WTC11 (cell line): ENCODE measurements at regions of chr17 and their contacts with region 1.

Region 1: GRCh38 chr17:49880291-49881053 is 32.6 kb upstream of the TAC4 start:
- DNase-seq: peak; percentile 96
- ATAC-seq: peak; percentile 89
- H3K4me3 Mint-ChIP-seq: peak overlapping the region; percentile 71
- H3K27ac Mint-ChIP-seq: no peak overlapping the region
- H3K4me1 Mint-ChIP-seq: peaks cover 30% of the 10 kb centered on the region
- H3K27me3 Mint-ChIP-seq: peaks cover 28% of the 10 kb centered on the region
- CTCF ChIP-seq: peak; percentile 96

Region 2: GRCh38 chr17:49861150-49861892 is 19.2 kb before region 1 on chr17:
- CTCF ChIA-PET with region 1: interaction called, 26 read pairs
- POLR2A ChIA-PET with region 1: interaction called, 4 read pairs
- DNase-seq: no peak
- ATAC-seq: no peak
- H3K4me3 Mint-ChIP-seq: no peak overlapping the region
- H3K27ac Mint-ChIP-seq: no peak overlapping the region
- H3K4me1 Mint-ChIP-seq: peaks cover 41% of the 10 kb centered on the region
- H3K27me3 Mint-ChIP-seq: peaks cover 2% of the 10 kb centered on the region; the same call in 1 of the 2 replicates
- CTCF ChIP-seq: peak; percentile 80

Region 3: DNA sequence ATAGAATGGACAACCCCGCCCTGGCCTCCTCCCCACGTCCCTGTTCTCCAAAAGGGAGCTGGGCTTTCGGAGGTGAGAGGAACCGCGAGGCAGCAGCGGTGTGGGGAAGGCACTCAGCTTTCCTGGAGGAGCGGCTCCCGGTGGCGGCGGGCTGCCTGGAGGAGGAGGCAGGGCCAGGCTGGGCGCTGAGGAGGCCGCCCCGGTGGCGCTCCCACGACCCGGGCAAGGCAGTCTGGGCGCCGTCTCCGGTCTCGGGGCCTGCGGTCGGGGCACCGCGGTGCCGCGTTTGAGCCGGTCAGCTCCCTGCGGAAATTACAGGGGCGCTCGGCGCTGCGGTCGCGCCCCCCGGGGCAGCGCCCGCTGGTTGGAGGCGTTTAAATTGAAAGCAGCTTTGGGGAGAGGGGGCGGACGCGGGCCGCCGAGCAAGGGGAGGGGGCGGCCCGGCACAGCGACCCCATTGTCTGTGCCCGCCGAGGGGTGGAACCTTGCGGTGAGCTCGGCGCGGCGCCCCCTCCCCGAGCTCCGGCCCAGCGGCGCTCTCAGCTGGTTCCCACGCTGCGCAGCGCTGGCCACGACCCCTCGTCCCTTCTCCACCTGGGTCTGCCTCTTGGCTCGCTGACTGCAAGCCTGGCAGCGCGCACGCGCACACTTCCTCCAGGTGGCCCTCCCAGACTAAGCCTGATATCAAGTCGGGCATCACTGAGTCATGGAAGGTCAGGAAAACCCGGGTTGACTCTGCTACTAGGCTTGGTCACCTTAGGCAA is 29.8 kb after region 1 on chr17:
- CTCF ChIA-PET with region 1: interaction called, 21 read pairs
- POLR2A ChIA-PET with region 1: interaction called, 6 read pairs
- DNase-seq: peak; percentile 68
- ATAC-seq: peak; percentile 71
- H3K4me3 Mint-ChIP-seq: peak overlapping the region; percentile 81
- H3K27ac Mint-ChIP-seq: no peak overlapping the region
- H3K4me1 Mint-ChIP-seq: peaks cover 26% of the 10 kb centered on the region
- H3K27me3 Mint-ChIP-seq: peaks cover 84% of the 10 kb centered on the region
- CTCF ChIP-seq: no peak

Region 4: DNA sequence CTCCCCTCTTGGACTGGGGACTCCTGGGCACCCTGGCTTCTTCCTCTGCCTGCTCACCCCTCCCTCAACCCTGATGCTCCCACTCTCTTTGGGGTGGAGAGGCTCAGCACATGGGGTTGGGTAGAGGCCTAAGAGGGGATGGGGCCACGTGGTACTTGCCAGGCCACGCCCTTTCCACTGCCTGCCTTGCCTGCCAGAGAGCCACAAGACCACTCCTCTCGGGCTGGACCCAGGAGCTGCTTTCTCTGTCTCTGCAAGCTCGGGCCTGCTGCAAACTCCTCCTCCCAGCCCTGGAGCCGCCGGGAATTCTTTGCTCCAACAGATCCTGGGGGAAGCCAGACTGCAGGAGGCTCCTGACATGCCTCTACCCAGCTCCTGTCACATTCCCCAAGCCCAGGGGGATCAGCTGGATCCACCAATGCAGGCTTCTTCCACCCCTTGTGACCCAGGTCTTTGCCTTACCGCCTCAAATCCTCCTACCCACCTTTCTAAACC is 100.3 kb after region 1 on chr17:
- CTCF ChIA-PET with region 1: interaction called, 11 read pairs
- POLR2A ChIA-PET with region 1: interaction called, 3 read pairs
- DNase-seq: peak; percentile 85
- ATAC-seq: peak; percentile 95
- H3K4me3 Mint-ChIP-seq: no peak overlapping the region
- H3K27ac Mint-ChIP-seq: no peak overlapping the region
- H3K4me1 Mint-ChIP-seq: peaks cover 45% of the 10 kb centered on the region
- H3K27me3 Mint-ChIP-seq: peaks cover 91% of the 10 kb centered on the region
- CTCF ChIP-seq: no peak

Region 5: DNA sequence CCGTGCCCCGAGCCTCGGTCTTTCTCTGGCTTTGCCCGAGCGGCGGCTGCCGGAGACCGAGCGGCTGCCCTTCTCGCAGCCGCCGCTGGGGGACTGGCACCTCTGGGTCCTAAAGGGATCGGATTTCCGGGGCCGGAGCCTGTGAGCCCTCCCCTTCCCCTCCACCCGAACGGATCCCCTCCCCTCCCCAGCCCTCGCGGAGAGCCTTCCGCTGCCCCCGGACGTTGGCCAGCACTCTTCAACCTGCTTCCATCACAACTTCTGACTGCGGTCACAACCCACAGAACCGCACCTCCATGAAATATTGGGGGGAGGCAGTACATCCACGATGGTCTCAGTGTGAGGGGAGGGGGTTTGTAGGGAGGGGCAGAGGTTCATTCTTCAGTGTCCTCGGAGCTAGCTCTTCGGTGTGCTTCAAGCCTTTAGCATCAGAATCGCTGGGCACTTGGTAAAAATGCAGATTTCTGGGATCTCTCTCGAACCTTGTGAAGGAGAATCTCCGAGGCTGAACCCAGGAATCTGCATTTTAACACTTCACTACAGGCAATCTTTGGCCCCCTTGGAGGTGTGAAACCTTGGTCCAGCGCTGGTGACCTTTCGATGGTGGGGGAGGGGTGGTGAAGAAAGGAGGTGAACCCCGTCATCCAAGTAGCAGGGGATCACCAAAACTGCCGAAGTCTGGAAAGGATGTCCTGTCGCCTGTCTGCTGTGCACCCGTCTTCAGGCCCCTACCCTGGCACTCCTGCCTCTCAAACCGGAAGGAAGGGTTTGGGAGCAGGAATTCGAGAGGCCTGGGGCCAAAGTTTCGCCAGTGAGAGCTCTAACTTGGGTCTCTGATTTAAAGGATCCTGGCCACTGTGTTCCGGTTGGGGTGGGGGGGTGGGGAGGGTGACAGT is 270.8 kb after region 1 on chr17:
- CTCF ChIA-PET with region 1: no interaction called
- POLR2A ChIA-PET with region 1: no interaction called
- DNase-seq: peak; percentile 92
- ATAC-seq: peak; percentile 58
- H3K4me3 Mint-ChIP-seq: peak overlapping the region; percentile 75
- H3K27ac Mint-ChIP-seq: peak overlapping the region; percentile 95
- H3K4me1 Mint-ChIP-seq: peaks cover 38% of the 10 kb centered on the region
- H3K27me3 Mint-ChIP-seq: peaks cover 19% of the 10 kb centered on the region
- CTCF ChIP-seq: no peak